ENCODE measurements at regions of chr6 and their contacts with region 1.

Region 1: DNA sequence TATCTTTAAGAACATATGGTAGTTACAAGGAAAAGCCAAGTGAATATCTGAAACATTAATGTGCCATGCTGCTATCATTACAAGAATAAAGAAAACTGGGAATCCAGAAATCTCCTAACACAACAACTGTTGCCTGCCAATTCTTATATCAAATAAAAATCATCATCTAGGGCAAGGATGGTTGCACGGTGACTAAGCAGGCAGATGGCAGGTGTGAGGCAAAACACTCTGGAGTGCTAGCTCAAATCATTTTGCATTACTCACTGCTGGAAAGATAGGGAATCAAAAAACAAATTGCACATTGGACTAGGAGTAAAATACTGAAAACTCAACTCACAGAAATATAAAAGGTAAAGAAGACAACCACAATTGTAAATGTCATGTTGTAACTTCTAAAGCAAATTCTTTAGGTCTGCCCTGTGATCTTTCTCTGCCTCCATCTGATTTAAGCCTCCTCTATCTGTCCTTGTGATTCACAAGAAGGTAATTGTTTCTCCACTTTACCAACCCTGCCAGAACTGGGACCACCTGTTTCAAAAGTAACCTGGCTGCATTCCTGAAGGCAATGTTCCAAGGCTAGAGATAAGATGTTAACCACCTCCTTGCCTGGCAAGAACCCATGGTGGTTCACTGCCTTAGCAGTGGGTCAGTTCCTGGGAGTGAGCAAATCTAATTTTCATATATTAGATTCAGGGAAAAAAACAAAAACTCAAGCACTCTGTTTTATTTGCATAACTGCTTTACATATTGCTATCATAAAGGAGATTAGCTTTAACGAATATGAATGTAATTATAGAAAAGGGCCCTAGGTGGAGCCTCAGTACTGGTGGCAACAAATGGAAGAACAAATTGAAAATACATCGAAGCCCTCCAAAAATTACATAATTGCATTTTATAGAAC is 33.1 kb upstream of the LCA5 start:
- DNase-seq: no peak
- H3K4me3 Mint-ChIP-seq: no peak overlapping the region
- H3K27ac Mint-ChIP-seq: no peak overlapping the region
- H3K4me1 Mint-ChIP-seq: no peaks in the 10 kb centered on the region
- H3K27me3 Mint-ChIP-seq: peaks cover 4% of the 10 kb centered on the region

Region 2: DNA sequence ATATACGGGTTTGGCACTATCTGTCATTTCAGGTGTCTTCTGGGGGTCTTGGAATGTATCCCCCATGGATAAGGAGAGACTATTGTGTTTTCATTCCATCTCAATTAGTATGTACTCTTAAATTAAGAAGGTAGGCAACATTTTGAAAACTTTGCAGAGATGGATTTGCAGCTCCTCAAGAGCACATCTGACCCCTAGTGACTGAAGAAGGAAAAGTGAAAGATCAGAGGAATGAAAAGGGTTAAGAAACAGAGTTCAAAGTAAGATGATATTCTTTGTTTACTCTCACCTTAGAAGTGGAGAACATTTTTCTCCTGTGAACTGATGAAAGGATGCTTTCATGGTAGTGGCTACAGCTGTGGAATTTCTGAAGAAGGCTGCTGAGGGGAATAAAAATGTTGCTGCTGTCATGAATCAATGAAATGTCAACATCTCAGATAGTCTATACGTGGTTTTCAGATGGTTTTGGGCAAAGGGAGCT is 102.3 kb after region 1 on chr6:
- intact Hi-C with region 1: loop called (anchors 2 kb)
- DNase-seq: no peak
- H3K4me3 Mint-ChIP-seq: no peak overlapping the region
- H3K27ac Mint-ChIP-seq: no peak overlapping the region
- H3K4me1 Mint-ChIP-seq: peaks cover 16% of the 10 kb centered on the region
- H3K27me3 Mint-ChIP-seq: no peaks in the 10 kb centered on the region

Region 3: DNA sequence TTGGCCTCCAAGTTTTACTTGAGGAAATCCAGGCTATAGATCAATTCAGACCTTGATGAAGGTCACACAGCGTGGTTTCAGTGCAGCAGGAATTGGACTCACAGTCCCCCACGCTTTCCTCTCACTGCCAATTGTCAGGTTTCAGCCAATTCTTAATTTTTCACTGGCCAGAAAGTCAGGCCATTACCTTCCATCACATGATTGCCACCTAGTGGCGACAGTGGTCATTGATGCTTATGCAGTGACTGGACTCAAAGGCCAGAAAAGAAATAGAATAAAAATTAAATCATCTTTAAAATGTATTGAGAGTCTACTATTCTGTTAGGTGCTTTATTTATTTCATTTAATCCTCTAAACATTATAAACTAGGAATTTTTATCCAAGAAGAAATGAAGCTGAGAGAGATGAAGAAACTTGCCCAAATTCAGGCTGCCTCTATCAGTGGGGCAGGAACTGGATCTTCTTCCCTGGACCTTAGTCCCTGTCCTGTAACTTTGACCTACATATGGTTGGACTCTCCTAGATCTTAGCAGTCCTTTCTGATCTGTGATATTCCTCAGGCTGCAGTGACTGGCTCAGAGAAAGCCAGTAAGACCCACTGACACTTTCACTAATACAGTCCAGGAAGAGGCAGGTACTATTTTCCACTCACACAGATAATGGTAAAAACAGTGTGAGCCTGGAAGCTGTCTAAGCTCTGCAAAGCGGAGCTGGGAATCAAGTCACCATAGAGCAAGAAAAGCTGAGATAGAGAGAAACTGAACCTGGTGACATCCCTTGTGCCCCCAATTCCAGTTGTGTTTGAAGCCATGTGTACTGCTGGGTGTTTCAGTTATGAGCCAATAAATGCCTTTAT is 243.7 kb after region 1 on chr6:
- intact Hi-C with region 1: loop called (anchors 5 kb)
- DNase-seq: peak; percentile 16
- H3K4me3 Mint-ChIP-seq: no peak overlapping the region
- H3K27ac Mint-ChIP-seq: no peak overlapping the region
- H3K4me1 Mint-ChIP-seq: no peaks in the 10 kb centered on the region
- H3K27me3 Mint-ChIP-seq: peaks cover 6% of the 10 kb centered on the region

Region 4: DNA sequence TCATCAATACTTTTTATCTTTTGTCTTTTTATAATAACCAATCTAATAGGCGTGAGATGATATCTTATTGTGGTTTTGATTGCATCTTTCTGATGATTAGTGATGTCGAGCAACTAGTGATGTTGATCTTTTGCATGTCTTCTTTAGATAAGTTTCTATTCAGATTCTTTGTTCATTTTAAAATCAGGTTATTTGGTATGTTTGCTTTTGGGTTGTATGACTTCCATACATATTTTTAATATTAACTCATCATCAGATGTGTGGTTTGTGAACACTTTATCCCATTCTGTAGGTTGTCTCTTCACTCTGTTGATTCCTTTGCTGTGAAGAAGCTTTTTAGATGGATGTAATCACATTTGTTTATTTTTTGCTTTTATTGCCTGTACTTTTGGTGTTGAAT is 831.9 kb after region 1 on chr6:
- intact Hi-C with region 1: no loop called
- DNase-seq: no peak
- H3K4me3 Mint-ChIP-seq: no peak overlapping the region
- H3K27ac Mint-ChIP-seq: no peak overlapping the region
- H3K4me1 Mint-ChIP-seq: no peaks in the 10 kb centered on the region
- H3K27me3 Mint-ChIP-seq: no peaks in the 10 kb centered on the region

Measured in activated T-helper 2 cell treated with anti-CD3 and anti-CD28 coated beads, Interferon-gamma antibody, Interleukin-2, Interleukin-4, amounts not matched to agents 10 μg/mL and 5 μg/mL and 100 μg/mL, durations not matched to agents 14 hours and 24 hours and 36 hours (primary cell).